ENCODE measurements at regions of chr5 and their contacts with region 1.

Region 1: DNA sequence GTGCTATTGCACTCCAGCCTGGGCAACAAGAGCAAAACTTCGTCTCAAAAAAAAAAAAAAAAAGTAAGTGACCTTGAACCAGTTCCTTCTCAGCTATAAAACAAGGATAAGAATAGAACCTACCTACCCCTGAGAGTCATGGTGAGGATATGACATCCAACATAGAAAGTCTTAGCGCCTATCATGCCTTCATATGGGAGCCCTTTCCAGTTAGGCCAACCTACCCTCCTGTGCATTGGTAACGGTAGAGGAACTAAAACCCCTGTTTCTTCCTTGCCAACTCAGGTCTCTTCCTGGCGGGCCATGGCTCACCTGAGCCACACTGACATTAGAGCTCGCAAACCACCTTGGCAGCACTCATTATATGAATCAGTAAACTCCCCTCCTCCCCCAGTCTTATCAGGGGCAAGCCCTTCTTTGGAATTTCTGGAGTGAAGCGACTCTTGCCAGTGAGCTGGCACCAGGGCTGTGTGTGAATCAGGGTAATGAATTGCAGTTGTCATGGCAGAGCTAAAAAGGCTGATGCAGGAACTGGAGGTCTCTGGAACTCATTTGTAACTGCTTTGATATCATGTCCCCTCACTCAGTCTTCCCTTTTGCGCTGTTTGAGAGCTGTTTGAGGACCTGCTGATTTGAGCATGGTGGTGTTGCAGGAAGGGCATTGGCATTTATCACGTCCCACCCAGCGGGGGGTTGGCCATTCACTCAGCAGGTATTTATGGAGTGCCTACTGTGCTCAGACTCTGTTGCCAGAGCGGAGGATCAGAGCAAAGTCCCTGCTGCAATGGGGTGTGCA is 10.3 kb downstream of the WWC1 start:
- DNase-seq: peak; percentile 95
- ATAC-seq: peak; percentile 93
- H3K4me3 ChIP-seq: peak overlapping the region; percentile 38; the same call in 1 of the 2 replicates
- H3K27ac ChIP-seq: peak overlapping the region; percentile 85
- H3K4me1 ChIP-seq: peaks cover 38% of the 10 kb centered on the region
- H3K27me3 ChIP-seq: no peaks in the 10 kb centered on the region
- CTCF ChIP-seq: no peak

Region 2: DNA sequence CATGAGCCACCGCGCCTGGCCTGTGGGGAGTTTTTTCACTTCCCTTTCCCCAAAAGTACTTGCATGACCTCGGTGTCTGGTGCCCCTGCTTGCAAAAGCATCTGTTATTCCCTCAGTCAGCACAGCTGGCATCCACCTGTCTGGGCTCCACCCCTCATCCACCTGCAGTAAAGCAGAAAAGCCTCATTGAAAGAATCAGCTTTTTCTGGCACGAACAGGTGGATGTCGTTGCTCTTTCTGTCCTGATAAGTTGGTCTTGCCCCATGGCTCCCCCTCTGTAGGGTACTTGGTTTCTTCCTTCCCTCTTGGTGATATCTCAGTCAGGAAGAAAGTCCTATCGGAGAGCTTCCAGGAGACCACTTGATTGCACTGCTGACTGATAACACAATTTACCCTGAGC is 27.0 kb after region 1 on chr5:
- CTCF ChIA-PET with region 1: no interaction called
- POLR2A ChIA-PET with region 1: no interaction called
- intact Hi-C with region 1: loop called (anchors 2 kb)
- DNase-seq: peak; percentile 30
- ATAC-seq: no peak
- H3K4me3 ChIP-seq: peak overlapping the region; percentile 44; the same call in 1 of the 2 replicates
- H3K27ac ChIP-seq: peak overlapping the region; percentile 21; the same call in 1 of the 2 replicates
- H3K4me1 ChIP-seq: peaks cover 74% of the 10 kb centered on the region
- H3K27me3 ChIP-seq: no peaks in the 10 kb centered on the region
- CTCF ChIP-seq: no peak

Region 3: GRCh38 chr5:168464214-168464613 is 162.4 kb after region 1 on chr5:
- CTCF ChIA-PET with region 1: no interaction called
- POLR2A ChIA-PET with region 1: no interaction called
- intact Hi-C with region 1: no loop called
- DNase-seq: no peak
- ATAC-seq: no peak
- H3K4me3 ChIP-seq: no peak overlapping the region
- H3K27ac ChIP-seq: no peak overlapping the region
- H3K4me1 ChIP-seq: no peaks in the 10 kb centered on the region
- H3K27me3 ChIP-seq: no peaks in the 10 kb centered on the region
- CTCF ChIP-seq: no peak